ENCODE measurements at regions of chr18 and their contacts with region 1.

Region 1: DNA sequence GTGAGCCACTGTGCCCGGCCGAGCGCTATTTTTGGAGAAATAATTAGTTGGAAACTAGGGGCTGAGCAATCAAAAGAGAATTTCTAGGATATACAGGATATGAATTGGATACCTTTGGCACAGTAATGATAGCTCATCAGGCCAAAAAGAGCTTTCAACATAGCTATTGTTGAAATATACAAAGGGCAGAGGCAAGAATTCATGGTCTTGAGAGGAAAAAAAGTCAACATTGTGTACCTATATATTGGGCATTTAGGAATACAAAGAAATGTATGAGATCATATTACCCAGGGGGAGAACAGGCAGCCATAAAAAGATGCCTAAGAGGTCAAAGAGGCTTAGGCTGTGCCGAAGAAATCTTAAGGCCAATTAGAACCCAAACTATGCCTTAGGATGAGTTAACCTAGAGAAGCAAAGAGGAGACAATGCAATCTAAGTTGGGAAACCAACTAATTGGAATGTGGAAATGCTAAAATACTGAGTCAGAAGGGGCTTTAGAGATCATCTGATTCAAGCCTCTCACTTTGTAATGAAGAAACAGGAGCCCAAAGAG is 99.0 kb downstream of the RBBP8 start:
- DNase-seq: peak; percentile 65
- H3K4me3 ChIP-seq: no peak overlapping the region
- CTCF ChIP-seq: no peak

Region 2: GRCh38 chr18:23020555-23021294 is 11.4 kb before region 1 on chr18:
- CTCF ChIA-PET with region 1: interaction called, 15 read pairs
- POLR2A ChIA-PET with region 1: no interaction called
- DNase-seq: no peak
- H3K4me3 ChIP-seq: no peak overlapping the region
- CTCF ChIP-seq: no peak

Region 3: DNA sequence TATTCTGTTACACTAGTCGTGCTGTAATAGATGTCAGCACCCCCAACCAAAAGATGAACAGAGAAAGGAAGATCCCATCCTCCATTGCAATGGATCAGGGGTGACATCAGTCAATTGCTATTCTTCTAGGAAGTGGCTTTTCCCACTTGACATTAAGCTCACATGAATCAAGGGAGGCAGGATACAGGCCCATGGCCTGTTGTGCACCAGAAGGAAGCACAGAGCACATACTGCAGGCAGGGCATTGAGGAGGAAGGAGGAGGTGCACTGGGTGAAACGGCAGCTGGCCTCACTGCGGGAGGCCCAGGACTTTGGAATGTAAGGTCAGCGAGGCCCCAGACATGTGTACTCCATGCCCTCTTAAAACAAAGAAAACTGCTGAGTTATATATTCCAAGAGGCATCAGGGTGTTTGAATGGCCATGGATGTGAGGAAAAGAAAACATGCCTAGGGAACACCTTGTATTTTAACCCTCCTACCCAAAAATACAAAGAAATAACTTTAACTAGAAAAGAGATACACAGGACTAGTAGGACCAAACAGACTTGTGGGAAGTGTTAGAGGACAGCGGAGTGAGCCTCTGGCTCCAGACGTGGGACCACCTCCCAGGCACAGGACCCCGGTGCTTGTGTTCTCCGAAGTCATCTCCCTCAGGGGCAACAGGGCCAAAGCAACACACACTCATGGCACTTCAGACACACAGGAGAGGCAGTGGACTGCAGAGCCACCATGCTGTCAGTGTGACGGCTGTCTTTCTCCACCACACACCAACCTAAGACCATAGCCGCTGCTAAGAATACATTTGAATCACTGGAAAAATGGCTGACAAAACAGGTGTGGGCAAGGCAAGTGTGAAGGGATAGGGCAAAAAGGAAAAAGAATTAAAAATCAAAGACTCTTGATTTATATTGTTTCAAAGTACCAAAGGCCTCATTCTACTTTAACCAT is 369.6 kb after region 1 on chr18:
- CTCF ChIA-PET with region 1: interaction called, 13 read pairs
- POLR2A ChIA-PET with region 1: no interaction called
- DNase-seq: no peak
- H3K4me3 ChIP-seq: no peak overlapping the region
- CTCF ChIP-seq: no peak

Region 4: DNA sequence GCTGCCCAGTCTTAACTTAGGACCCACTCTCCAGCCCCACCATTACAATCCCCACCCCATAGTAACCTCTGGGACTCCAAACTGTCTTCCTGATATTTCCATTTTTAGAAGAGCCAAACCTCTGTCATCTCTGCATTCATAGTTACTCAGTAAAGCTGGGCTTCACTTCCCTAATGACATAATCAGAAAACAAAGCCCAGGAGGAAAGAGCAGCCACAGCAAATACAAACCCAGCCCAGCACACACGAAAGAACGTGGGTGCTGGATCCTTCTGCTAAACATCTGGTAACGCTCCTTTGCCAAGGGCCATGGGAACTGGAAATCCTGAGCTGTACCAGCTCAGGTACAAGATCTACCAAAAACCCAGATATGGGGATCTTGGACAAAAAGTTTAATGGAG is 384.2 kb after region 1 on chr18:
- CTCF ChIA-PET with region 1: interaction called, 89 read pairs
- POLR2A ChIA-PET with region 1: no interaction called
- DNase-seq: no peak
- H3K4me3 ChIP-seq: no peak overlapping the region
- CTCF ChIP-seq: no peak

Measured in AG04449 (cell line).